Caco-2 (cell line): ENCODE measurements at regions of chr2 and their contacts with region 1.

Region 1: DNA sequence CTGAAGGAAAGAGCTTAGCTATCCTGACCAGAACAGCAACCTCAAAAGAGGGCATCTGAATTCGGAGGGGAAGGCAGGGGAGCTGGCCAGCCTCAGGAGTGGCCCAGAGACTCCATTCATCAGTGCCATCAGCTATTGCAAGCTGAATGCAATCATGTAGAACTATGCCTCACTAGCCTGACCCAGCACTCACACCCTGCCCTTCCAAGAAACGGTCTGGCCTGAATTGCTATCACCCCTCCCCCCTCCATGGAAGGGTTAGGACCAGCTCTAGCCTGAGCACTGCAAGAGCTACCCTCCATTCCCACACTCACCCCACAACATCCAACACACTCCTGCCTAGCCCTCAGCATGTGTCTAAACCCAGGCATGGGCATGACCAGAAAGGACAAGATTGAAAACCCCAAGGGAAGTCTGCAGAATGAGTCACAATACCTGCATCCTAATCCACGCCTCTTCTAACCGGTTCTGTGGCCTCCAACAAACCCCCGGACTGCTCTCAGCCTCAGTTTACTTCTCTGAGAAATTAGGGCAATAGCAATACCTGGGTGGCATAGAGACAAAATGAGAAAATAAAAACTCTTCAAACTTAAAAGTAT is 120.3 kb downstream of the BCL11A start:
- DNase-seq: no peak
- H3K4me3 ChIP-seq: no peak overlapping the region
- H3K4me3 Mint-ChIP-seq: no peak overlapping the region
- H3K27ac Mint-ChIP-seq: peak overlapping the region; percentile 17
- H3K4me1 ChIP-seq: peaks cover 24% of the 10 kb centered on the region
- H3K4me1 Mint-ChIP-seq: peaks cover 24% of the 10 kb centered on the region
- H3K27me3 ChIP-seq: no peaks in the 10 kb centered on the region
- H3K27me3 Mint-ChIP-seq: no peaks in the 10 kb centered on the region
- CTCF ChIP-seq: no peak

Region 2: DNA sequence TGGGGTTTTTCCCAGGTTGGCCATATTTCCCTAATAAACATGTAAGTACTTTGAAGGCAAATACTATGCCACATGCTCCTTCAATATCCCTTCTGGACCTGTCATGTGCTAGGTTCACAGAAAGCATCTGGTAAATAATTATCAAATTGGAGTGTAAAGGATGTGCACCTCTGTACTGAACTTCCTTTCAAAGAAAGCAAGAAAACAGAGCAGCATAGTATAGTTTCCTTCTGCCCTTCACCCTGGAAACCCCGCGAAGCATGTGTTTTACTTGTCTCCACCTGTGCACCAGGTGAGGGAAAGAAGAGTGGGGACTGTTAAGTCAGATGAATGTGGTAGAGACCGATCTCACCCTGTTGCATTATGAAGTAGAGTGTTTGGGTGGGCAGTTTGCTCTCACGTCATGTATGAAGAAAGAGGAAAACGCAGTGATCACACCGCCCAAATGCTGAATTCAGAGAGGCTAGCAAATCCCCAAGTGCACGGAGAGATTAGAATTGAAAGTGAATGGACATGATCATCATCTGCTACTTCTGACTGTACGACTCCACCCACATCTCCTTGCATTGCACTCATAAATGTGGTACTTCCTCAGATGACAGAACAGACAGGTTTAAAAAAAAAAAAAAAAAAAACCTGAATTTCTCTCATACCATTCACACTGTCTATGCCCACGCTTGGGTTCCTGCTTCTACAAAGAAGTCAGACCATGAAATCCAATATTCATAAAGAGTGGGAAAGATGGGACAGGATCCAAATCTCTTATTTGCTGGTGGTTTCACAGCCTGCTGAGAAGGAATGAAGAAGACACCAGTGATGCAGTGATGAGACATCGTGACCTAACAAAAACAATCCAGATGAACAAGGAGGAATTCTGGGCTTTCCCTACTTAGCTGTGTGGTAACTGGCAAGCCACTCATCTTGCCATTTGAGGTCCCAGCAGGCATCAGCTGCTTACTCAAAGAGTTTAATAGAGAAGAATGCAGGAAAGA is 328.3 kb before region 1 on chr2:
- CTCF ChIA-PET with region 1: no interaction called
- POLR2A ChIA-PET with region 1: no interaction called
- intact Hi-C with region 1: no loop called
- DNase-seq: no peak
- H3K4me3 ChIP-seq: no peak overlapping the region
- H3K4me3 Mint-ChIP-seq: no peak overlapping the region
- H3K27ac Mint-ChIP-seq: no peak overlapping the region
- H3K4me1 ChIP-seq: peaks cover 9% of the 10 kb centered on the region; the same call in 1 of the 2 replicates
- H3K4me1 Mint-ChIP-seq: peaks cover 16% of the 10 kb centered on the region
- H3K27me3 ChIP-seq: no peaks in the 10 kb centered on the region
- H3K27me3 Mint-ChIP-seq: no peaks in the 10 kb centered on the region
- CTCF ChIP-seq: no peak

Region 3: DNA sequence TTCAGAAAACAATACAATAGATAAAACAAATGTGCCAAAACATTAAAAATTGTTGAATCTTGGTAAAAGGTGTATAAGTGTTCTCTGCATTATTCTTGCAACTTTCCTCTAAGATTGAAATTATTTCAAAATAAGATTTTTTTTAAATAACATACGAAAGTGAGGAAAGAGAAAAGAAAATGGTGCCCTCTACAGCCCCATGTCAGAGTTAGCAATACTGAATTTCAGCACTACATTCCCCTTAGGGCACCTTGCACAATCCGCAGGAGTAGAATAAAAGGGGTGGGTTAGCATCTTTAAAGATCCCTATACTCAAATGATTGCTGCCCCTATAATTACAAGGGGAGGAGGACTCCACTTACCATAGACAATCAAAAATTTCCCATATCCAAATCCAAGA is 313.3 kb before region 1 on chr2:
- CTCF ChIA-PET with region 1: no interaction called
- POLR2A ChIA-PET with region 1: no interaction called
- intact Hi-C with region 1: no loop called
- DNase-seq: no peak
- H3K4me3 ChIP-seq: no peak overlapping the region
- H3K4me3 Mint-ChIP-seq: no peak overlapping the region
- H3K27ac Mint-ChIP-seq: no peak overlapping the region
- H3K4me1 ChIP-seq: no peaks in the 10 kb centered on the region
- H3K4me1 Mint-ChIP-seq: peaks cover 2% of the 10 kb centered on the region
- H3K27me3 ChIP-seq: no peaks in the 10 kb centered on the region
- H3K27me3 Mint-ChIP-seq: no peaks in the 10 kb centered on the region
- CTCF ChIP-seq: no peak

Region 4: GRCh38 chr2:60535685-60536312 is 102.7 kb after region 1 on chr2:
- CTCF ChIA-PET with region 1: no interaction called
- POLR2A ChIA-PET with region 1: no interaction called
- intact Hi-C with region 1: loop called (anchors 5 kb)
- DNase-seq: no peak
- H3K4me3 ChIP-seq: no peak overlapping the region
- H3K4me3 Mint-ChIP-seq: no peak overlapping the region
- H3K27ac Mint-ChIP-seq: no peak overlapping the region
- H3K4me1 ChIP-seq: peaks cover 13% of the 10 kb centered on the region
- H3K4me1 Mint-ChIP-seq: peaks cover 47% of the 10 kb centered on the region
- H3K27me3 ChIP-seq: no peaks in the 10 kb centered on the region
- H3K27me3 Mint-ChIP-seq: no peaks in the 10 kb centered on the region
- CTCF ChIP-seq: no peak

Region 5: GRCh38 chr2:60674524-60675165 is 241.5 kb after region 1 on chr2:
- CTCF ChIA-PET with region 1: no interaction called
- POLR2A ChIA-PET with region 1: no interaction called
- intact Hi-C with region 1: no loop called
- DNase-seq: peak; percentile 87 to 90
- H3K4me3 ChIP-seq: no peak overlapping the region
- H3K4me3 Mint-ChIP-seq: no peak overlapping the region
- H3K27ac Mint-ChIP-seq: no peak overlapping the region
- H3K4me1 ChIP-seq: no peaks in the 10 kb centered on the region
- H3K4me1 Mint-ChIP-seq: no peaks in the 10 kb centered on the region
- H3K27me3 ChIP-seq: no peaks in the 10 kb centered on the region
- H3K27me3 Mint-ChIP-seq: peaks cover 6% of the 10 kb centered on the region
- CTCF ChIP-seq: peak; percentile 91 to 98